ENCODE measurements at regions of chr19 and their contacts with region 1.

Region 1: GRCh38 chr19:13718733-13719132 is 45.6 kb upstream of the MRI1 start:
- DNase-seq: peak; percentile 37
- H3K4me3 ChIP-seq: no peak overlapping the region
- CTCF ChIP-seq: peak; percentile 44

Region 2: GRCh38 chr19:13604902-13605586 is 113.7 kb before region 1 on chr19:
- in situ Hi-C with region 1: loop called (anchors 5 kb)
- DNase-seq: no peak
- H3K4me3 ChIP-seq: no peak overlapping the region
- CTCF ChIP-seq: no peak

Region 3: GRCh38 chr19:13665125-13665905 is 53.4 kb before region 1 on chr19:
- in situ Hi-C with region 1: loop called (anchors 5 kb)
- DNase-seq: no peak
- H3K4me3 ChIP-seq: no peak overlapping the region
- CTCF ChIP-seq: no peak

Region 4: DNA sequence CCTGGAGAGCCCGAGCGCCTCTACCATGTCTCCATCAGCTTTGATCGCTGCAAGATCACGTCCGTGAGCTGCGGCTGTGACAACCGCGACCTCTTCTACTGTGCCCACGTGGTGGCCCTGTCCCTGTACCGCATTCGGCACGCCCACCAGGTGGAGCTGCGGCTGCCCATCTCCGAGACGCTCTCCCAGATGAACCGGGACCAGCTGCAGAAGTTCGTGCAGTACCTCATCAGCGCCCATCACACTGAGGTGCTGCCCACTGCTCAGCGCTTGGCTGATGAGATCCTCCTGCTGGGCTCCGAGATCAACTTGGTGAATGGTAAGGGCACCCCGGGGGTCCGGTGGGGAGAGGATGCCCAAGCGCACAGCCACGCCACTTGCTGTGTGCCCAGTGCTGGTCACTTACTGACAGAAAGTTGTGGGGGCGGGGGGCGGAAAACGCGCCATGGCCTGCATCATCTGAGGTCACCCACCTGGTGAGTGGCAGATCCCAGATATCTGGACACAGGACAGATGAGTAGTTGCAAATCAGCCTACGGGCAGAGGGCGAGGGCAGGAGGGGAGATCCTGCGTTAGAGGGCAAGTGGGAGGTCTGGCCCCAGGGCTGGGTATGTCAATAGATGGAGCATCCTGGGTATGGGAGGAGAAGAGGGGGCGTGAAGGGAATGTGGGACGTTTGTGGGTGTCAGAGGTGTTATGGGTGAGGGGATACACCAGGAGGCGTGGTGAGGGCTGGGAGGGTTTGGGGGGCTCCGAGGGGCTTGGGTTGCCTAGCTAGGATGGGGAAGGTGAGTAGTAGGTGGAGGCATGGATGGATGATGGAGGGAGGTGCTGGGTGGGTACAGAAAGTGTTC is 86.3 kb after region 1 on chr19:
- in situ Hi-C with region 1: no loop called
- DNase-seq: no peak
- H3K4me3 ChIP-seq: no peak overlapping the region
- CTCF ChIP-seq: peak; percentile 22